ENCODE measurements at regions of chr1 and their contacts with region 1.

Region 1: DNA sequence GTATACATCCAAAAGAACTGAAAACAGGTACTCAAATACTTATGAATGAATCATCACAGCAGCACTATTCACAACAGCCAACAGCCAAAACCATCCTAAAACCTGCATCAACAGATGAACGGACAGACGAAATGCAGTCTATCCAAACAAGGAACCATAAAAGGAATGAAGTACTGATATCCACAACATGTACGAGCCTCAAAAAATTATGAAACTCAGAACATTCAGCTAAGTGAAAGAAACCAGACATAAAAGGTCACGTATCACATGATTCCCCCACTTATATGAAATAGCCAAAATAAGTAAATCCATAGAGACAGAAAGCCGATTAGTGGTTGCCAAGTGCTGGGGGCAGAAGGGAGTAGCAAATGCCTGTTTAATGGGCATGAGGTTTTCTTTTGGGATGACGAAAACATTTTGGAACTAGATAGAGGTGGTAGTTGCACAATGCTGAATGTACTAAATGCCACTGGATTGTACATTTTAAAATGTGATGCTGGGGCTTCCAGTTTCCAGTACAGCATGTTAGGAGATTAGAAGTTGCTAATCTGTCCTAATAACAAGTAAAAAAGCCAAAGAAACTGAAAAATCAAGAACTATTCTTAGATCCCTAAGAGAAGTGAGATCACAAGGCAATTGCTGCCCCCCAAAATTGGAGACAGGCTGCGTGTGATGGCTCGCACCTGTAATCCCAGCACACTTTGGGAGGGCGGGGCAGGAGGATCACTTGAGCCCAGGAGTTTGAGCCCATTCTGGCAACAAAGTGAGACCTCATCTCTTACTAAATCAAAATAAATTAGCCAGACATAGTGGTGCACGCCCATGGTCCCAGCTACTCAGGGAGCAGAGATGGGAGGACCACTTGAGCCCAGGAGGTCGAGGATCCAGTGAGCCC is 25.3 kb downstream of the CLSTN1 start:
- DNase-seq: no peak
- H3K4me3 Mint-ChIP-seq: no peak overlapping the region
- H3K27ac Mint-ChIP-seq: no peak overlapping the region
- H3K4me1 Mint-ChIP-seq: peaks cover 49% of the 10 kb centered on the region
- H3K27me3 Mint-ChIP-seq: no peaks in the 10 kb centered on the region

Region 2: DNA sequence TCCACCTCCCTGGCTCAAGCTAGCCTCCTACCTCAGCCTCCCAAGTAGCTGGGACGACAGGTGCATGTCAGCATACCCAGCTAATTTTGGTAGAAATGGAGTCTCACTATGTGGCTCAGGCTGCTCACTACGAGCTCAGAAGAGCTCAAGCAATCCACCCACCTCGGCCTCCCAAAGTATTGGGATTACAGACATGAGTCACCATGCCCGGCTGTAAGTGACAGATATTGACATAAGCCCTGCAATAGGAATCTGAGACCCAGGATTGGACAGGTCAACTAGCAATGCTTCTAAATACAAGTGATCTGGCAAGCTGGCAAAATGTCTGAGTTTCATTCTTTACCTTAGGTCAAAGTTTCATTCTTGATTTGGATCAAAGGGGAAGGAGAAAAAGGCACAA is 604.5 kb before region 1 on chr1:
- CTCF ChIA-PET with region 1: no interaction called
- POLR2A ChIA-PET with region 1: no interaction called
- intact Hi-C with region 1: no loop called
- DNase-seq: no peak
- H3K4me3 Mint-ChIP-seq: no peak overlapping the region
- H3K27ac Mint-ChIP-seq: no peak overlapping the region
- H3K4me1 Mint-ChIP-seq: peaks cover 11% of the 10 kb centered on the region
- H3K27me3 Mint-ChIP-seq: peaks cover 33% of the 10 kb centered on the region

Region 3: DNA sequence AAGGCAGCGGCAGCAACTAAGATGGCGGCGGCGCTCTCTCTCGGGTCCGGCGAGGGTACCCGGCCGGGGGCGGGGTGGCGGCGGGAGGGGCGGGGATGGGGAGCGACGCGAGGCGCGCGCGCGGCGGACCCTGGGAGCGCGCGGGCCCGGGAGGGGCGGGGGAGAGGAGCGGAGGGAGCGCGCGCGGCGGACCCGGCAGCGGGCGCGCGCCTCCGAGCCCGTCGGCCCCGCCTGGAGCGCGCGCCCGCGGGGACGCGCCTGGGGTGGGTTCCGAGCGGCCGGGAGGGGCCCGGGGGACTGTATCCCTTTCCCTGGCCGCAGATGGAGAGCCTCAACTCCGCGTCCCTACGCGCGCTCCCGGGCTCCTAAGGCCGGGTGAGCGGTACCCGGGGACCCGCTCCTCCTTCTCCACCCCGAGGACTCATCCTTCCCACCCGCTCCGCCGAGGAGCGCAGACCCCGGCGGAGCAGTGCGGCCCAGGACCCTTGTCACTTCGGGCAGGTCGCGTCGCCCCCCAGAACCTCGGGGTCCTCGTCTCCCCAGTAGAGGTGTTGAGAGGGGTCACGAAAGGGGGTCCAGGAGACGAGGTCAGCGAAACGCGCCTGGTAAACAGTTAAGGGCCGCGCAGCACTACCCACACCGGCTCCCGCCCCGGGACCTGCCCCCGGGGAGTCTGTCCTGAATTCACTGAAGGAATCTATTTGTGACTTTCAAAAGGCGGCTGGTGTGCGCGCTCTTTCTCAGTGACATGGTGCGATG is 25.6 kb after region 1 on chr1 and contains the start of gene CLSTN1:
- CTCF ChIA-PET with region 1: no interaction called
- POLR2A ChIA-PET with region 1: interaction called, 5 read pairs
- intact Hi-C with region 1: loop called (anchors 2 kb)
- DNase-seq: peak; percentile 93
- H3K4me3 Mint-ChIP-seq: peak within 1 kb of the TSS; percentile 94
- H3K27ac Mint-ChIP-seq: peak within 1 kb of the TSS; percentile 77
- H3K4me1 Mint-ChIP-seq: peaks cover 46% of the 10 kb centered on the region
- H3K27me3 Mint-ChIP-seq: no peaks in the 10 kb centered on the region
- total RNA-seq, gene CLSTN1: 33.6 to 34.1 TPM

Region 4: DNA sequence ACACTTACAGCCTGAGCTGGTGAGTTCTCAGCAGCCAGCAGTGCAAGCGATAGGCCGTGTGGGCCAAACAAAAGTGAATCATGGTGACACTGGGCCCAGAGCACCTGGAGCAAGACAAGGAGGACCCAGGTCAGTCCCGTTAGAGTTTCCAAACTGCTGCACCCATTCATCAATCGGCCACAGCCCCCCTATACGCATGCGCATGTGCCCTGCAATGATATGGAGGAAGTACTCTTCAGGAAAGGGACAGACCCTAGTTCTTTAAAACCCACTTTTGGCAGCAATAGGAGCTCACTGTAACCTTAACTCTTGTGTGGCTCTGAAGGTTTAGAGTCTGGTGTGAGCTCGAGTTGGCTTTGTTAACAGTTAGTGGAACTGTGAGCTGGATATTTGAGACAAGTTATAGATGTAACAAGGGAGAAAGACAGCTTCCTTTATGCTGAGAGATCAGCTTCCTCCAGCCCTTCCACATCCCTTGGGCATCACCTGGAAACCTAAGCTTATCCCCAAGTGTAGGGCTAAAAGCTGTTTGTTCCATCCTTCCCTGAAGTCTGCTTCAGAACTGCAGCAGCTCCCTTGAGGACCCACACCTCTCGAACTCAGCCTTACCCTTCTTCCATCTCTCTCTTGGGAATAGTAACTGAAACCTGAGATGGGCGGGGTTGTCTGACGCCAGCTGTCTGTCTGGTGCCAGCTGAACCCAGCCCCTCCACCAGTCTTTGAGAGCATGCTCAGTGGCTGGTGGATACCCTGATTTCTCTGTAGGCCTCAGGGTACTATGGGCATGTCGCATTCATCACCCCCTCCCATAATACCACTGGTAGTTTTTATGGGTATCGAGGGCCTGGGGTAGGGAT is 162.5 kb after region 1 on chr1:
- CTCF ChIA-PET with region 1: no interaction called
- POLR2A ChIA-PET with region 1: no interaction called
- intact Hi-C with region 1: no loop called
- DNase-seq: no peak
- H3K4me3 Mint-ChIP-seq: no peak overlapping the region
- H3K27ac Mint-ChIP-seq: no peak overlapping the region
- H3K4me1 Mint-ChIP-seq: no peaks in the 10 kb centered on the region
- H3K27me3 Mint-ChIP-seq: no peaks in the 10 kb centered on the region

Measured in activated CD4-positive, alpha-beta memory T cell treated with anti-CD3 and anti-CD28 coated beads for 36 hours (primary cell).